ENCODE measurements at regions of chr1 and their contacts with region 1.

Region 1: GRCh38 chr1:44571712-44572571 is 102.3 kb downstream of the TMEM53 start:
- DNase-seq: peak; percentile 45
- H3K4me3 ChIP-seq: peak overlapping the region in 1 of 2 experiments; percentile 23; a peak in 1 of 4 replicates
- H3K27ac ChIP-seq: no peak overlapping the region
- H3K4me1 ChIP-seq: no peaks in the 10 kb centered on the region
- H3K27me3 ChIP-seq: peaks cover 20% of the 10 kb centered on the region; the same call in 1 of the 2 replicates
- CTCF ChIP-seq: peak; percentile 53
- EP300 ChIP-seq: no peak
- RAD21 ChIP-seq: peak; percentile 51

Region 2: DNA sequence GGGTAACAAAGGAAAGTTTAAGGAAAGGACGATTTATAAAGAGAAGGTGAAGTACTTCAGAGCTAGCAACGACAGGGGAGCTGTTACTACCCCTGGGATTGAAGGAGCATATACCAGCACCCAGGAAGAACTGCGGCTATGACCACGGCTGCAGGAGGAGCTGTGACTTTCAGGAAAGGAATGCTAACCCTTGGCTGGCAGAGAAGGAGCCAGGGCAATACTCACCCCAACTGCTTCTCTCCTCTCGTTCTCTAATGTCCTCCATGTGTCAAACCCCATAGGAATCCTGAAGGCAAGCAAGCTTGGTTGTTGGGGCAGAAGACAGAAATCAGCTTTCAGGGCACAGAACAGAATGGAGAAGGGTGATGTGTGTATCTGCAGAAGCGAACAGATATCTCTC is 18.2 kb before region 1 on chr1:
- CTCF ChIA-PET with region 1: interaction called, 19 read pairs
- POLR2A ChIA-PET with region 1: no interaction called
- DNase-seq: no peak
- H3K4me3 ChIP-seq: no peak overlapping the region
- H3K27ac ChIP-seq: no peak overlapping the region
- H3K4me1 ChIP-seq: no peaks in the 10 kb centered on the region
- H3K27me3 ChIP-seq: peaks cover 8% of the 10 kb centered on the region
- CTCF ChIP-seq: no peak
- EP300 ChIP-seq: no peak
- RAD21 ChIP-seq: no peak

Region 3: GRCh38 chr1:44587796-44588460 is 16.0 kb after region 1 on chr1:
- CTCF ChIA-PET with region 1: interaction called, 19 read pairs
- POLR2A ChIA-PET with region 1: no interaction called
- DNase-seq: no peak
- H3K4me3 ChIP-seq: no peak overlapping the region
- H3K27ac ChIP-seq: no peak overlapping the region
- H3K4me1 ChIP-seq: no peaks in the 10 kb centered on the region
- H3K27me3 ChIP-seq: peaks cover 26% of the 10 kb centered on the region
- CTCF ChIP-seq: no peak
- EP300 ChIP-seq: no peak
- RAD21 ChIP-seq: no peak

Region 4: GRCh38 chr1:44602634-44603628 is 31.0 kb after region 1 on chr1:
- CTCF ChIA-PET with region 1: interaction called, 16 read pairs
- POLR2A ChIA-PET with region 1: no interaction called
- DNase-seq: peak; percentile 69
- H3K4me3 ChIP-seq: no peak overlapping the region; a peak in 1 of 4 replicates
- H3K27ac ChIP-seq: no peak overlapping the region
- H3K4me1 ChIP-seq: peaks cover 0 to 24% of the 10 kb centered on the region in 2 experiments; a peak in 2 of 4 replicates
- H3K27me3 ChIP-seq: peaks cover 25% of the 10 kb centered on the region; the same call in 1 of the 2 replicates
- CTCF ChIP-seq: no peak
- EP300 ChIP-seq: peak in 1 of 2 experiments; percentile 37; a peak in 1 of 4 replicates
- RAD21 ChIP-seq: no peak

Region 5: DNA sequence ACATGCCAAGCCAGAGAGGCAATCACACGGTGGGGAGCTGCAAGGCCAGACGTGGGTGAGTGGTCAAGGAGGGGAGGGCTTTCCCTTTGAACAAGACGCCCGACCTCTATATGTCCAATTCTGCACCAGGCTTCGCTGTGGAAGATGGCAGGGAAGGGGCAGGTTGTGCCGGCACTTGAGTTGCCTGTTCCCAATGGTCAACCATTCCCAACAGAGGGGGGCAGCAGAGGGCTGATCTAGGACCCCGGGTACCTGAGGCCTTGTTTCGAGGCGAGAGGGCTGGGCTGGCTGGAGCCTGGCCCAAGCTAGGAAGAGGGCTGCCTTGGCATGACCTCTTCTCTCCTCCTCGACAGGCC is 37.4 kb after region 1 on chr1:
- CTCF ChIA-PET with region 1: interaction called, 16 read pairs
- POLR2A ChIA-PET with region 1: no interaction called
- DNase-seq: peak; percentile 76
- H3K4me3 ChIP-seq: no peak overlapping the region
- H3K27ac ChIP-seq: no peak overlapping the region
- H3K4me1 ChIP-seq: peaks cover 0 to 3% of the 10 kb centered on the region in 2 experiments; a peak in 2 of 4 replicates
- H3K27me3 ChIP-seq: no peaks in the 10 kb centered on the region
- CTCF ChIP-seq: peak; percentile 59
- EP300 ChIP-seq: no peak
- RAD21 ChIP-seq: peak; percentile 78